ENCODE measurements at regions of chr18 and their contacts with region 1.

Region 1: DNA sequence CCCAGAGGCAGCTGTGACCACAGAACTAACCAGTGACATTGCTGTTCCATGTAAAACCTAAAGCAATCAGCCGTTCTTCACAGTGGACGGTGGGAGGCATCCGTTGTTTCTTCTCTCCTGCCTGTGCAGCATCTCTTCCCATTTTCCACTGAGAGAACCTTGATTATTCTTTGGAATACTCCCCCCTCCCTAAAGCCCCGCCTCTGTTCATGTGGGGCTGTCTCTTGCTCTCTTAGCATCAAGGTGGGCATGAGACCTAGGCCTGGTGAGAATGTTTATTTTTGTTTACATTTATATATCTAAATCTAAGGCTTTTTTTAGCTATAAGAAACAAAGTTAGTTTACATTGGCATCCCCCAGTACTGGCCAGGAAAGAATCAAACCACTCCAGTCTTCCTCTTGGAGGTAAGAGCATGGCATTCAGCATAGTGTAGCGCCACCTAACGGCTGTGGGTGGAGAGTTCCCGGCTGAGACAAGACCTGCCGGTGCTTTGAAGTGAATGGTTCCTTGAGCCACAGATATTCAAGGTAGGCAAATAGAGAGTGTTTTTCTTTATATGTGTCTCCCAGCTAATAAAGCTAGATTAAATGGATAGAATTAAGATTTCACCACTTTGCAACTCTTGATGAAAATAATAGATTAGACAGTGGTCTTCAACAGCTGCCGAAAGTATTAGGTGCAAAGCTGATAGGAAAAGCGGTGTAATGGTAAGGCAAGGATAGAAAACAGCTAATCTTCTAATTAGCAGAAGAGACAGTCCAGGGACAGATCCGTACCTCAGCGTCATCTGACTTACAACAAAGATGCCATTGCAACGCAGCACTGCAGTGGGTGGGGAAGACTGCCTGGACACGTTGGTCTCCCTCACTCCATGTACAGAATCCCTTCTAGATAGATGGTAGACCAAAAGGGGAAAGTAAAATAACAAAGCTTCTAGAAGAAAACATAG is 219.6 kb upstream of the RAB12 start:
- DNase-seq: peak; percentile 15 to 75
- H3K4me3 ChIP-seq: no peak overlapping the region
- H3K4me1 ChIP-seq: no peaks in the 10 kb centered on the region
- H3K27me3 ChIP-seq: no peaks in the 10 kb centered on the region

Region 2: DNA sequence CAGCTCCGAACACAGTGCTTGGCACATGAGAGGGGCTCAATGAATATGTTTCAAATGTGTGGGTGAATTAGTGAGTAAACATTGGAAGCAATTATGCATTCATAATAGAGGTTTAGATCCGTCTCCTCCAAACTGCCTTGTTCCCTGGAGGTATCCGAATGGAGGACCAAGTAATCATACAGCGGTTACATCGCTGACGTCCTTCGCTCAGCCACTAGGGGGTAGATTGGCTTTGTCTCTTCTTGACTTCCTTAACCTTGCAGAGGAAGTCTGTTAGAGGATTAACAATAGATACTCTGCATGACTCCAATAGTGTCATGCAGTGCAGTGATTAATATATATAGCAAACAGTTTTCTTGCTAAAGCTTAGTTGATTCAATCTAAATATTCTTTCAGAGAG is 305.5 kb before region 1 on chr18:
- in situ Hi-C with region 1: loop called (anchors 25 kb)
- DNase-seq: peak; percentile 3 to 28
- H3K4me3 ChIP-seq: no peak overlapping the region
- H3K4me1 ChIP-seq: no peaks in the 10 kb centered on the region
- H3K27me3 ChIP-seq: no peaks in the 10 kb centered on the region

Region 3: DNA sequence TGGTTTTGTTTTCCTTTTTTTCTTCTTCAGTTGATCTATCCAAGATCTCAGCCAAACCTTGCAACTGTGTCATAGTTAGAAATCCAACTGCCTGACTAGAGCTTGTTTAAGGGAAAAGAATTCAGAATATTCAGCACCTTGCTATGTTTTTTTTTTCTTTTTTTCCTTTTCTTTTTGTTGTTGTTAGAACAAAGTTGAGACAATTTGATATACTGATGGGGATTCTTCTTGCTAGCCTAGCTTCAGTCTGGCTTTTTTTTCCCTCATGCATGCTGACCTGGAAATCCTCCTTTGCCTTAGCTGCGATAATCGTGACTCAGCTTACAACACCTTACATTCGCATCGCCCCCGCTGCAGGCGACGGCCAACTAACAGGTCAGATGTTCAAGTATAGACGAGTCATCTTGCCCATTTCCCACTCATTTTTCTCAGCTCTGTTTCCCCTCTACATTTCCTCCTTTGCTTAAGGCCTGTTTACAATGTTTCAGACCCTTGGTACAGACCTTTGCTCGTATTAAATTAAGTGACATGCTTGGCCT is 267.7 kb before region 1 on chr18:
- in situ Hi-C with region 1: no loop called
- DNase-seq: no peak
- H3K4me3 ChIP-seq: no peak overlapping the region
- H3K4me1 ChIP-seq: no peaks in the 10 kb centered on the region
- H3K27me3 ChIP-seq: no peaks in the 10 kb centered on the region

Region 4: DNA sequence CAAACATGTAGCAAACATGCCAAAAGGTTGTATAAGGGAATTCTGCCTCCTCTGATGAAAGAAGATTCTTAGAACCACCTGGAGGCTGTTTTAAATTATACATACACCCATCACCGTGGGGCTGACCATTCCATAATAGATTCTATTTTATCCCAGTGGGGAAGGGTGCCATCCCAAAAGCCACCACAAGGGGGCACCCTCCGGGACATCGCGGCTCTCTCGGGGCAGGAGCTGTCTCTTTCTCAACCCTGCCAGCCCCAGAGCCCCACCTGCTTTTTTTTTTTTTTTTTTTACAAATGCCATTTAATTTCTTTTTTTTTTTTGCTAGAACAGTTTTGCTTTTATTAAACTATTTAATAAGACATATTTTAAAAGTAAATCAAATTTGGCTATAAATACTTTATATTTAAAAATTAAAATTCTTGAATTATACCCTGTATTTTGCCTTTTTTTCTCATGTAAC is 307.1 kb after region 1 on chr18:
- in situ Hi-C with region 1: no loop called
- DNase-seq: peak; percentile 55 to 83
- H3K4me3 ChIP-seq: no peak overlapping the region
- H3K4me1 ChIP-seq: no peaks in the 10 kb centered on the region
- H3K27me3 ChIP-seq: no peaks in the 10 kb centered on the region